ENCODE measurements at regions of chr9 and their contacts with region 1.

Region 1: GRCh38 chr9:74379718-74380117 is 117.4 kb upstream of the RORB start:
- DNase-seq: peak in 1 of 2 experiments; percentile 16
- H3K4me3 ChIP-seq: no peak overlapping the region
- H3K27ac ChIP-seq: no peak overlapping the region
- H3K4me1 ChIP-seq: no peaks in the 10 kb centered on the region
- H3K27me3 ChIP-seq: no peaks in the 10 kb centered on the region
- CTCF ChIP-seq: peak; percentile 62

Region 2: DNA sequence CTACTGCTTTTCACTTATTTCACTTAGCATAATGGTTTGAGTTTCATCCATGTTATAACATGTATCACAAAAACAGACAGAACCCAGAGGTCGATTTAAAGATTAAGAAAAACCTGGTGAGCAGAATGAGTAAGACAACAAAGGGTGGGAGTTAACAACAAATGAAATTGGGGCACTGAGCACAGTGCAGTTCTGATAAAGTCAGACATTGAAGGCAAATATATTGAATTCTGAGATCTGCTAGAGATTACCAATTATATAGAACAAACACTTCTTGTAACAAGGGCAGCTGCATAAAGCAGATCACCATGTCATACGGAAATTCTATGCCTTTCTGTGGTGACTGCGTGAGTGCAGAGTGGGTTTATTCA is 399.8 kb before region 1 on chr9:
- CTCF ChIA-PET with region 1: no interaction called
- POLR2A ChIA-PET with region 1: no interaction called
- intact Hi-C with region 1: loop called (anchors 10 kb)
- DNase-seq: no peak
- H3K4me3 ChIP-seq: no peak overlapping the region
- H3K27ac ChIP-seq: no peak overlapping the region
- H3K4me1 ChIP-seq: no peaks in the 10 kb centered on the region
- H3K27me3 ChIP-seq: no peaks in the 10 kb centered on the region
- CTCF ChIP-seq: no peak

Region 3: GRCh38 chr9:74570879-74571512 is 191.3 kb after region 1 on chr9:
- CTCF ChIA-PET with region 1: no interaction called
- POLR2A ChIA-PET with region 1: no interaction called
- intact Hi-C with region 1: loop called (anchors 10 kb)
- DNase-seq: peak in 1 of 2 experiments; percentile 10
- H3K4me3 ChIP-seq: no peak overlapping the region
- H3K27ac ChIP-seq: no peak overlapping the region
- H3K4me1 ChIP-seq: no peaks in the 10 kb centered on the region
- H3K27me3 ChIP-seq: no peaks in the 10 kb centered on the region
- CTCF ChIP-seq: peak; percentile 78

Measured in PC-9 (cell line).